ENCODE measurements at regions of chr3 and their contacts with region 1.

Region 1: DNA sequence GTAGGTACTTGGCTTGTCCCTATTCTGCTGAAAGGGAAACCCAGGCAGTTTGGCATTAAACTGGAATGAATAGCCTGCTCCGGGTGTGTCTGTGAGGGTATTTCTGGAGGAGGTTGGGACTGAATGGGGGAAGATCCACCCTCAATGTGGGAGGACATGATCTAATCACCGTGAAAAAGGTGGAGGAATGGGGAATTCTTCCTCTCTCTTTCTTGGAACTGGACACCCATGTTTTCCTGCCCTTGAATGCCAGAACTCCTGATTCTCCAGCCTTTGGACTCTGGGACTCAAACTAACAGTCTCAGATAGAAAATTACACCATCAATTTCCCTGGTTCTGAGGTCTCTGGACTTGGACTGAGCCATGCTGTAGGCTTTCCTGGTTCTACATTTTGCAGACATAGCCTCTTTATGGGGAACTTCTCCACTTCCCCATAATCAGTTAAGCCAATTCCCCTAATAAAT is 391.7 kb downstream of the EDEM1 start:
- DNase-seq: no peak
- H3K4me3 ChIP-seq: no peak overlapping the region
- H3K27ac ChIP-seq: no peak overlapping the region
- H3K4me1 ChIP-seq: no peaks in the 10 kb centered on the region
- H3K27me3 ChIP-seq: no peaks in the 10 kb centered on the region
- CTCF ChIP-seq: no peak
- POLR2A ChIP-seq: no peak

Region 2: DNA sequence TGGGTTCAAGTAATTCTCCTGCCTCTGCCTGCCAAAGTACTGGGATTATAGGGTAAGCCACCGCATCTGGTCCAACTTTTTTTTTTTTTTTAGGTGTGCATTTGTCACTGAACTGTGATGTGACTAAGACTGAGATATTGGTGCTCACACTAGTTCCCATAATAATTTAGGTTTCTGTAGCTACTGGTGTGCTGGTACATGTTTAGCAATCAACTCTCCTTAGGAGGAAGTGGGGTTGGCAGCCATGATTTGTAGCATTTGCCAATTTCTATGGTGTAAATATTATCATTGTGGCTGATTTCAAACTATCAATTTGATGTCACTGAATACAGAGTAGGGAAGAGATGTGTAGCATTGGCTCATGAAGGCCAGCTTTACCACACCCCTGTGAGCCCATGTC is 19.0 kb before region 1 on chr3:
- intact Hi-C with region 1: loop called (anchors 2 kb)
- DNase-seq: no peak
- H3K4me3 ChIP-seq: no peak overlapping the region
- H3K27ac ChIP-seq: no peak overlapping the region
- H3K4me1 ChIP-seq: no peaks in the 10 kb centered on the region
- H3K27me3 ChIP-seq: no peaks in the 10 kb centered on the region
- CTCF ChIP-seq: no peak
- POLR2A ChIP-seq: no peak

Region 3: GRCh38 chr3:7100136-7100535 is 1521.0 kb after region 1 on chr3:
- intact Hi-C with region 1: no loop called
- DNase-seq: no peak
- H3K4me3 ChIP-seq: no peak overlapping the region
- H3K27ac ChIP-seq: no peak overlapping the region
- H3K4me1 ChIP-seq: no peaks in the 10 kb centered on the region
- H3K27me3 ChIP-seq: no peaks in the 10 kb centered on the region
- CTCF ChIP-seq: no peak
- POLR2A ChIP-seq: no peak

Region 4: DNA sequence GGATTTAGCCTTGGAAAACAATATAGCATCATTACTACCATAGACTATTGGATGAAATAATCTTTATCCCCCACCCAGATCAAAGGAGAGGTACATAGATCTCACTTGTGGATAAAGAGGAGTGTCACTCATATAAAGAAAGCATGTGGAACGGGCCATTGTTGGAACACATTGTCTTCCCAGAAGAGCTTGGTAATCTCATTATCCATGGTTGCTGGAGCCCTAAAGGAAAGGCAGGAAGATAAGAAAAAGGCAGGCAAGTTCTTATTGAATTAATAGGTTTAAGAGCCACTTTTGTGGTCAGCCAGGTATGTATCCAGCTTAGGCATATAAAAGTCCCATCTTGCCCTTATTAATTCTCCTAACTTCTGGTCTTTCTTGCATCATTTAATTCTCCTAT is 1940.9 kb after region 1 on chr3:
- intact Hi-C with region 1: loop called (anchors 5 kb)
- DNase-seq: no peak
- H3K4me3 ChIP-seq: no peak overlapping the region
- H3K27ac ChIP-seq: no peak overlapping the region
- H3K4me1 ChIP-seq: no peaks in the 10 kb centered on the region
- H3K27me3 ChIP-seq: no peaks in the 10 kb centered on the region
- CTCF ChIP-seq: no peak
- POLR2A ChIP-seq: no peak

Measured in breast epithelium (tissue), 4 donors.